Left ventricle myocardium inferior (tissue), 1 donor: ENCODE measurements at regions of chr16 and their contacts with region 1.

Region 1: DNA sequence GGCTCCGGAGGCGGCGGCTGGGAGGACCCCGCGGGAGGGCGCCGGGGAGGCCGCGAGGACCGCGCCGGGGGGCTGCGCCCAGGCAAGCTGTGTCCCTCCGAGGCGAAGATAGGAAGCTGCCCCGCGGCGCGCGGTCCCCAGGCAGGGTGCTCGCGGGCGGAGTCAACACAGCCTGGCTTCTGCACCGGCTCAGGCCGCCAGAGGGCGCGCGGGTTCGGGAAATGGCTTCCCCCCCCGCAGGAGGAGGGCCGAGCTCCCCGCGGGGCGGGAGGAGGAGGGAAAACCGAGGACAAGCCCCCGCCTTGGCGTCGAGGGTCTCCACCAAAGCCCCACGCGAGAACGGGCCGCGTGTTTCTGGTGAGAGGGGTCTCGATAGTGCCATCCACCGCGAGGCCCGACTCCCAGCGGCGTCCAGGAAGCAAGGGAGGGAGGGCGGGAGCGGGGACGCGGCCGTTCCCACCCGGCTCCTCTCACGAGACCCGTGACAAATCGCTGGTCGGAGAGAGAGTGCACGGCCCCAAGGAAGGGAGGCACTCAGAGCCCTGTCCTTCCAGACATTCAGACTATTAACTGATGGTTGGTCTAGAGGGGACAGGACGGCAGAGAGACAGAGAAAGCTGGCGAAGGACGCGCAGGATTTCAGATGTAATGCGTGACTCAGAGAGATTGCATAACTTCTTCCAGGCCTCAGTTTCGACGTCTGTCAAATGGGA is 64.4 kb upstream of the DNAJA2 start:
- DNase-seq: peak; percentile 92
- H3K4me3 ChIP-seq: peak overlapping the region; percentile 86
- H3K27ac ChIP-seq: peak overlapping the region; percentile 48
- H3K4me1 ChIP-seq: peaks cover 11% of the 10 kb centered on the region
- H3K27me3 ChIP-seq: no peaks in the 10 kb centered on the region
- CTCF ChIP-seq: peak; percentile 94

Region 2: GRCh38 chr16:48164907-48165726 is 1127.2 kb after region 1 on chr16:
- intact Hi-C with region 1: loop called (anchors 10 kb)
- DNase-seq: peak; percentile 75
- H3K4me3 ChIP-seq: no peak overlapping the region
- H3K27ac ChIP-seq: no peak overlapping the region
- H3K4me1 ChIP-seq: peaks cover 12% of the 10 kb centered on the region
- H3K27me3 ChIP-seq: no peaks in the 10 kb centered on the region
- CTCF ChIP-seq: peak; percentile 91